ENCODE measurements at regions of chr1 and their contacts with region 1.

Region 1: DNA sequence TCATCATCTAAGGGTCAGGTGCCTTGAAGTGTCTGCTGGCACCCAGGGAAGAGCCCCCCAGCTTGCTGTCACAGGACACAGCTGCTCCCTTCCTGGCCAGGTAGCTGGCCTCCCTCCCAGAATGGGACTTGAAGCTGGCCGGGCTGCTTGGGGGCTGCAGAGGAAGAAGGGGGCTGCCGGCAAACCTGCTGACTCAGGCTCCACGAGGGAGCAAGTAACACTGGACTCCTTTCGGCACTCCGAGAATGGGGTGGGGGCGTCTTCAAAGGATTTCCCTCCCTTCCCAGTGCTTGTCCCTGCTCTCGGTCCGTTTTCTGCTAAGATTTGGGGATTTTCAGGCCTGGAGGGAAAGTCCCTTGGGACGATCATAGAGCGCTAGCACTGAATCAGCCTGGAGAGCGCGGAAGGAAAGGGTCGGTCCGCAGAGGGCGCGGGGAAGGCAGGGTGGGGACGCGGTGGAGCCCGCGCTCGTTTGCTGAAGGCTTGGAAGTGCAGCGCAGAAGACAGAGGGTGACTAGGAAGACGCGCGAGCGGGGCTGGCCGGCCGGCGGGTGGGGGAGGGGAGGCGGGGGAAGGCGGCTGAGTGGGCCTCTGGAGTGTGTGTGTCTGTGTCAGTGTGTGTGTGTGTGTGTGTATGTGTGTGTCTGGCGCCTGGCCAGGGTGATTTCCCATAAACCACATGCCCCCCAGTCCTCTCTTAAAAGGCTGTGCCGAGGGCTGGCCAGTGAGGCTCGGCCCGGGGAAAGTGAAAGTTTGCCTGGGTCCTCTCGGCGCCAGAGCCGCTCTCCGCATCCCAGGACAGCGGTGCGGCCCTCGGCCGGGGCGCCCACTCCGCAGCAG is at the start of gene CSF1:
- DNase-seq: peak; percentile 51 to 77 (median 58)
- H3K4me3 ChIP-seq: peak within 1 kb of the TSS; percentile 51 to 71
- H3K4me3 Mint-ChIP-seq: peak within 1 kb of the TSS; percentile 91 to 96 (median 94)
- H3K27ac ChIP-seq: peak within 1 kb of the TSS; percentile 57
- H3K27ac Mint-ChIP-seq: peak within 1 kb of the TSS; percentile 92 to 96 (median 94)
- H3K4me1 ChIP-seq: peaks cover 86% of the 10 kb centered on the region
- H3K4me1 Mint-ChIP-seq: peaks cover 54 to 84% (median 72%) of the 10 kb centered on the region in 4 donors
- H3K27me3 ChIP-seq: no peaks in the 10 kb centered on the region
- H3K27me3 Mint-ChIP-seq: peaks cover 0 to 1% of the 10 kb centered on the region in 2 donors
- total RNA-seq, gene CSF1: 10.3 to 13.9 TPM

Region 2: GRCh38 chr1:109802901-109803561 is 107.3 kb before region 1 on chr1:
- CTCF ChIA-PET with region 1: interaction called, 4 read pairs
- POLR2A ChIA-PET with region 1: interaction called, 20 read pairs
- intact Hi-C with region 1: loop called (anchors 2 kb)
- DNase-seq: peak in 1 of 5 donors; percentile 48
- H3K4me3 ChIP-seq: peak overlapping the region; percentile 18 to 26
- H3K4me3 Mint-ChIP-seq: peak overlapping the region; percentile 59 to 84 (median 80)
- H3K27ac ChIP-seq: peak overlapping the region; percentile 62
- H3K27ac Mint-ChIP-seq: peak overlapping the region; percentile 89 to 98 (median 93)
- H3K4me1 ChIP-seq: peaks cover 88% of the 10 kb centered on the region
- H3K4me1 Mint-ChIP-seq: peaks cover 53 to 91% (median 73%) of the 10 kb centered on the region in 4 donors
- H3K27me3 ChIP-seq: no peaks in the 10 kb centered on the region
- H3K27me3 Mint-ChIP-seq: no peaks in the 10 kb centered on the region

Region 3: GRCh38 chr1:109969146-109969829 is 58.9 kb after region 1 on chr1:
- CTCF ChIA-PET with region 1: no interaction called
- POLR2A ChIA-PET with region 1: no interaction called
- intact Hi-C with region 1: no loop called
- DNase-seq: no peak
- H3K4me3 ChIP-seq: no peak overlapping the region
- H3K4me3 Mint-ChIP-seq: no peak overlapping the region
- H3K27ac ChIP-seq: no peak overlapping the region
- H3K27ac Mint-ChIP-seq: no peak overlapping the region
- H3K4me1 ChIP-seq: no peaks in the 10 kb centered on the region
- H3K4me1 Mint-ChIP-seq: no peaks in the 10 kb centered on the region
- H3K27me3 ChIP-seq: no peaks in the 10 kb centered on the region
- H3K27me3 Mint-ChIP-seq: peaks cover 3 to 6% of the 10 kb centered on the region in 2 donors

Measured in CD4-positive, alpha-beta memory T cell (primary cell).